T-cell (primary cell): ENCODE measurements at regions of chr5 and their contacts with region 1.

Region 1: DNA sequence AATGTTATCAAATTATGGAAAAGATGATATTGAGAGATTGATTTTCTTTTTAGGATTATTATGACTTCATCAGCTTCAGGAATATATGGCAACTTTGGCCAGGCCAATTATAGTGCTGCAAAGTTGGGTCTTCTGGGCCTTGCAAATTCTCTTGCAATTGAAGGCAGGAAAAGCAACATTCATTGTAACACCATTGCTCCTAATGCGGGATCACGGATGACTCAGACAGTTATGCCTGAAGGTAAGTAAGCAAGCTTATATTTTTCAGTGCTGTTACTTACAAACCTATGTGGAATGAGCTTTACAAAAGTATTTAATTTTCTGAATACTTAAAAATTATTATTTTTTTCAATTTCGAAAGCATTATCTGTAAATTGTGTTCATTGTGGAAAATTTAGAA is 26.5 kb downstream of the HSD17B4 start:
- DNase-seq: no peak
- ATAC-seq: no peak
- H3K4me3 ChIP-seq: no peak overlapping the region
- H3K4me3 Mint-ChIP-seq: no peak overlapping the region
- H3K27ac ChIP-seq: no peak overlapping the region
- H3K27ac Mint-ChIP-seq: no peak overlapping the region
- H3K4me1 ChIP-seq: no peaks in the 10 kb centered on the region
- H3K4me1 Mint-ChIP-seq: no peaks in the 10 kb centered on the region
- H3K27me3 ChIP-seq: no peaks in the 10 kb centered on the region
- H3K27me3 Mint-ChIP-seq: no peaks in the 10 kb centered on the region

Region 2: DNA sequence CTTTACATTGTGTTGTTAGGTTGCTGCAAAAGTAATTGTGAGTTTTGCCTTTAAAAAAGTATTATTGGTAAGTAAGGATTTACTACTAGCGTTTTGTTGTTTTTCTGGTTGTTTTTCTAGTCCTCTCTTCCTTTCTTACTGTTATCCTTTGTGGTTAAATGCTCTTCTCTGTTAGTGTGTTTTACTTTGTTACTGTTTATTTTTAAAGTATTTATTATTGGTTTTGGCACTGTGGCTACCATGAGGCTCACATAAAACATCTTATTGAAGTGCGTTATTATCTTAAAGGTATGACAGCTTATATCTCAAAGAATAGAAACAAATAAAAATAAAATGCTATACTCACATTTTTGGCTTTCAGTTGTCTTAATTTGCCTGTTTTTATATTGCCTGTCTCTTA is 390.3 kb before region 1 on chr5:
- CTCF ChIA-PET with region 1: no interaction called
- POLR2A ChIA-PET with region 1: no interaction called
- DNase-seq: no peak
- ATAC-seq: no peak
- H3K4me3 ChIP-seq: no peak overlapping the region
- H3K4me3 Mint-ChIP-seq: no peak overlapping the region
- H3K27ac ChIP-seq: no peak overlapping the region
- H3K27ac Mint-ChIP-seq: no peak overlapping the region
- H3K4me1 ChIP-seq: no peaks in the 10 kb centered on the region
- H3K4me1 Mint-ChIP-seq: peaks cover 30 to 34% (median 32%) of the 10 kb centered on the region in 3 donors
- H3K27me3 ChIP-seq: no peaks in the 10 kb centered on the region
- H3K27me3 Mint-ChIP-seq: no peaks in the 10 kb centered on the region

Region 3: GRCh38 chr5:119468286-119468685 is 10.5 kb before region 1 on chr5:
- CTCF ChIA-PET with region 1: interaction called in 1 of 2 experiments, 11 read pairs
- POLR2A ChIA-PET with region 1: no interaction called
- DNase-seq: no peak
- ATAC-seq: no peak
- H3K4me3 ChIP-seq: no peak overlapping the region
- H3K4me3 Mint-ChIP-seq: no peak overlapping the region
- H3K27ac ChIP-seq: no peak overlapping the region
- H3K27ac Mint-ChIP-seq: peak overlapping the region in 1 of 2 donors; percentile 4
- H3K4me1 ChIP-seq: no peaks in the 10 kb centered on the region
- H3K4me1 Mint-ChIP-seq: peaks cover 26 to 43% (median 32%) of the 10 kb centered on the region in 3 donors
- H3K27me3 ChIP-seq: no peaks in the 10 kb centered on the region
- H3K27me3 Mint-ChIP-seq: no peaks in the 10 kb centered on the region